WTC11 (cell line): ENCODE measurements at regions of chr11 and their contacts with region 1.

Region 1: GRCh38 chr11:60762851-60763691 is 6.4 kb downstream of the MS4A15 start:
- DNase-seq: no peak
- ATAC-seq: peak; percentile 60
- H3K4me3 Mint-ChIP-seq: no peak overlapping the region
- H3K27ac Mint-ChIP-seq: no peak overlapping the region
- H3K4me1 Mint-ChIP-seq: peaks cover 21% of the 10 kb centered on the region
- H3K27me3 Mint-ChIP-seq: peaks cover 18% of the 10 kb centered on the region
- CTCF ChIP-seq: peak; percentile 54; the same call in 1 of the 2 replicates

Region 2: GRCh38 chr11:60345489-60345888 is 417.6 kb before region 1 on chr11:
- CTCF ChIA-PET with region 1: interaction called, 11 read pairs
- POLR2A ChIA-PET with region 1: no interaction called
- DNase-seq: peak; percentile 58
- ATAC-seq: peak; percentile 79
- H3K4me3 Mint-ChIP-seq: no peak overlapping the region
- H3K27ac Mint-ChIP-seq: no peak overlapping the region
- H3K4me1 Mint-ChIP-seq: peaks cover 26% of the 10 kb centered on the region
- H3K27me3 Mint-ChIP-seq: no peaks in the 10 kb centered on the region
- CTCF ChIP-seq: peak; percentile 46

Region 3: DNA sequence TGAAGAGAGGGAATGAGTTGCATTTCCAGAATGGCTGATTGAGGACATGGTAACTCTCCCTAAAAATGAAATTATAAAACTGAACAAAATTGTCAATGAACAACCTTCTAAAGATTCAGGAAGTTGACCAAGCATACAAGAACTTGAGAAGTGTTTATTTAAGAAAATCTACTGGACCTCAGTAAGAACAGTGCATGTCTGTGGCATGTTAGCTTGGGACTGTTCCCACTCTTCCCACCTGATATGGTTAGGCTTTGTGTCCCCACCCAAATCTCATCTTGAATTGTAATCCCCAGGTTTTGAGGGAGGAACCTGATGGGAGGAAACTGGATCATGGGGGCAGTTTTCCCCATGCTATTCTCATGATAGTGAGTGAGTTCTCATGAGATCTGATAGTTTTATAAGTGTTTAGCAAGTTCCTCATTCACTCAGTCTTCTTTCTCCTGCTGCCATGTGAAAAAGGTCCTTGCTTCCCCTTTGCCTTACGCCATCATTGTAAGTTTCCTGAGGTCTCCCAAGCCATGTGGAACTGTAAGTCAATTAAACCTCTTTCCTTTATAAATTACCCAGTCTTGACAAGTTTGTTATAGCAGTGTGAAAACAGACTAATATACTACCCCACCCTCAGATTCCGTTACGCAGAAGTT is 232.5 kb before region 1 on chr11:
- CTCF ChIA-PET with region 1: no interaction called
- POLR2A ChIA-PET with region 1: no interaction called
- DNase-seq: no peak
- ATAC-seq: no peak
- H3K4me3 Mint-ChIP-seq: no peak overlapping the region
- H3K27ac Mint-ChIP-seq: peak overlapping the region; percentile 57; the same call in 1 of the 2 replicates
- H3K4me1 Mint-ChIP-seq: peaks cover 19% of the 10 kb centered on the region
- H3K27me3 Mint-ChIP-seq: peaks cover 4% of the 10 kb centered on the region
- CTCF ChIP-seq: no peak

Region 4: DNA sequence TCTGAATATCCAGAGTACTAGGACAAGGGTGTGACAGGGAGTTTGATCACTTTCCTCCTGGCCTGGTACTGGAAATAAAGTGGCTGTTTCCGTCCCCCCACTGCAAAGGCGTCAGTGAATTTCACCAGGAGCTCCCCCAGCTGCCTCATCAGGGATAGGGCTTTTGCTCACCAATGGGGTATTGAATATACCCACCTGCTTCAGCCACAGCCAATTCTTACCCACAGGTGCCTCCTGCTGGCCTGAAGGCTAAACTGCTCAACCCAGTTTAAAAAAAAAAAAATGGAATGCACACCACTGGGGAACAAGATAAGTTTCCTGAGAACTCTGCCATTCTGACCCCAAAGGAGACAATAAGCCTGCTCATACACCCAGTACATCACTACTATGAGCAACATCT is 128.9 kb before region 1 on chr11:
- CTCF ChIA-PET with region 1: interaction called, 10 read pairs
- POLR2A ChIA-PET with region 1: no interaction called
- DNase-seq: peak; percentile 57
- ATAC-seq: peak; percentile 99
- H3K4me3 Mint-ChIP-seq: no peak overlapping the region
- H3K27ac Mint-ChIP-seq: no peak overlapping the region
- H3K4me1 Mint-ChIP-seq: no peaks in the 10 kb centered on the region
- H3K27me3 Mint-ChIP-seq: peaks cover 7% of the 10 kb centered on the region; the same call in 1 of the 2 replicates
- CTCF ChIP-seq: peak; percentile 58; the same call in 1 of the 2 replicates

Region 5: DNA sequence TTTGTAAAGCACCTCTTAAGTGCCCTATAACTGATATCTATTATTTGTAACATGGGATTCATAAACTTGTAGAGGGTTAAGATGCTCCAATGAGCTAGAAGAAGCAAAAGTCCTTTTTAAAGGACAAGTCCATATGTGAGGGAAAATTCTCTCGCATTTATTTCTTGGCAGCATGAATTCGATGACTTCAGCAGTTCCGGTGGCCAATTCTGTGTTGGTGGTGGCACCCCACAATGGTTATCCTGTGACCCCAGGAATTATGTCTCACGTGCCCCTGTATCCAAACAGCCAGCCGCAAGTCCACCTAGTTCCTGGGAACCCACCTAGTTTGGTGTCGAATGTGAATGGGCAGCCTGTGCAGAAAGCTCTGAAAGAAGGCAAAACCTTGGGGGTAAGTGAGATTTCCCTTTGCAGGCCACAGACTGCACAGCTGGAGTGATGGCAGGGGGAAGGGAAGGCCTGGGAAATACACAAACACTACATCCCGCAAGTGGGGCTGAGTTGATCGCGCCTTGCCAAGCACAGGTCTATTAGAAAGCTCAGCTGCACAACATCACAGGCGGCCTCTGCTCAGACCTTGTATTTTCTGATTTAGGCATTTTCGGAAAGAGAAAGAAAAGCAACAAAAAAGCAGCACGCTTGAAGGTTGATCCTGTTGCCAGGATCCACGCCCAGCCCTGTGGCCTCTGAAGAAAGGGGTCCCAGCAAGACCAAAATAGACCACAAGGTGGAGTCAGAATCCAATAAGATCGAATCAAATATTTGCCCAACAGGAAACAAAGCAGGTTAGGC is 62.2 kb before region 1 on chr11:
- CTCF ChIA-PET with region 1: interaction called, 31 read pairs
- POLR2A ChIA-PET with region 1: no interaction called
- DNase-seq: peak; percentile 50
- ATAC-seq: peak; percentile 95
- H3K4me3 Mint-ChIP-seq: no peak overlapping the region
- H3K27ac Mint-ChIP-seq: no peak overlapping the region
- H3K4me1 Mint-ChIP-seq: peaks cover 7% of the 10 kb centered on the region
- H3K27me3 Mint-ChIP-seq: peaks cover 3% of the 10 kb centered on the region; the same call in 1 of the 2 replicates
- CTCF ChIP-seq: peak; percentile 39; the same call in 1 of the 2 replicates

Region 6: GRCh38 chr11:60739114-60739513 is 24.0 kb before region 1 on chr11:
- CTCF ChIA-PET with region 1: interaction called, 41 read pairs
- POLR2A ChIA-PET with region 1: no interaction called
- DNase-seq: peak; percentile 49
- ATAC-seq: peak; percentile 98
- H3K4me3 Mint-ChIP-seq: no peak overlapping the region
- H3K27ac Mint-ChIP-seq: no peak overlapping the region
- H3K4me1 Mint-ChIP-seq: no peaks in the 10 kb centered on the region
- H3K27me3 Mint-ChIP-seq: no peaks in the 10 kb centered on the region
- CTCF ChIP-seq: peak; percentile 51

Region 7: DNA sequence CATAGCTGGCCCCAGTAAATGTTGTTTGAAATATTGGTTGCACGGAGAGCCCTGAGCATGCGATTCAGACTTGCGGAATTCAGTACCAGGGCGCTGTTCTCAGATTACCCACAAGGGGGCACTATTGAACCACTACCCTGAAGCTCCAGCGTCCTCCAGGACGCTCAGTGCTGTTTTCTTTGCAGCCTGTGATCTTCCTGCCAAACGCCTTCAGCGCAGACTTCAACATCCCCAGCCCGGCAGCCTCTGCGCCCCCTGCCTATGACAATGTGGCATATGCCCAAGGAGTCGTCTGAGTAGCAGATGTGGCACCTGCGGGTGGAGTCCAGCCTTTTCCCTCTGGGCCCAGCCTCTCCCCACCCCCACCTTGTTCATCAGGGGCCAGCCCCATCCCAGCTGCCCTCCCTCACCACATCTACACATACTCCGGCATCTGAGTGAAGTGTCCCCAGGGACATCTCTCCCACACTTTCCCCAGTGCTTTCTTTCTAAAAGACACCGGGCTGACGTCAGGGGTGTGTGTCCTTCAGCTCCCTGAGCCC is 12.4 kb after region 1 on chr11:
- CTCF ChIA-PET with region 1: interaction called, 125 read pairs
- POLR2A ChIA-PET with region 1: no interaction called
- DNase-seq: peak; percentile 93
- ATAC-seq: peak; percentile 99
- H3K4me3 Mint-ChIP-seq: no peak overlapping the region
- H3K27ac Mint-ChIP-seq: no peak overlapping the region
- H3K4me1 Mint-ChIP-seq: peaks cover 7% of the 10 kb centered on the region
- H3K27me3 Mint-ChIP-seq: peaks cover 5% of the 10 kb centered on the region; the same call in 1 of the 2 replicates
- CTCF ChIP-seq: peak; percentile 89